HEK293T (cell line): ENCODE measurements at regions of chr9 and their contacts with region 1.

Region 1: GRCh38 chr9:6681147-6681956 is 35.8 kb upstream of the GLDC start:
- DNase-seq: peak; percentile 91

Region 2: GRCh38 chr9:6703898-6704639 is 22.7 kb after region 1 on chr9:
- CTCF ChIA-PET with region 1: no interaction called
- POLR2A ChIA-PET with region 1: interaction called, 10 read pairs
- DNase-seq: peak; percentile 82

Region 3: GRCh38 chr9:6757456-6758247 is 76.3 kb after region 1 on chr9 and contains the start of gene KDM4C:
- CTCF ChIA-PET with region 1: no interaction called
- POLR2A ChIA-PET with region 1: interaction called, 17 read pairs
- DNase-seq: peak; percentile 92